ENCODE measurements at regions of chr7 and their contacts with region 1.

Region 1: GRCh38 chr7:128425850-128426249 is 16.1 kb upstream of the IMPDH1 start:
- DNase-seq: peak; percentile 49
- ATAC-seq: peak; percentile 21
- H3K4me3 ChIP-seq: no peak overlapping the region
- H3K27ac ChIP-seq: no peak overlapping the region
- H3K4me1 ChIP-seq: peaks cover 54% of the 10 kb centered on the region
- H3K27me3 ChIP-seq: peaks cover 0 to 12% of the 10 kb centered on the region in 2 experiments; a peak in 3 of 5 replicates
- CTCF ChIP-seq: peak; percentile 88
- EP300 ChIP-seq: no peak
- POLR2A ChIP-seq: no peak
- RAD21 ChIP-seq: peak; percentile 82

Region 2: GRCh38 chr7:128347647-128348097 is 78.2 kb before region 1 on chr7:
- CTCF ChIA-PET with region 1: interaction called, 6 read pairs
- POLR2A ChIA-PET with region 1: no interaction called
- in situ Hi-C with region 1: no loop called
- intact Hi-C with region 1: loop called (anchors 1 kb)
- DNase-seq: peak; percentile 50
- ATAC-seq: peak; percentile 66
- H3K4me3 ChIP-seq: no peak overlapping the region
- H3K27ac ChIP-seq: no peak overlapping the region
- H3K4me1 ChIP-seq: peaks cover 2% of the 10 kb centered on the region; the same call in 1 of the 2 replicates
- H3K27me3 ChIP-seq: peaks cover 2 to 11% of the 10 kb centered on the region in 2 experiments; a peak in 4 of 5 replicates
- CTCF ChIP-seq: peak; percentile 84
- EP300 ChIP-seq: no peak
- POLR2A ChIP-seq: no peak
- RAD21 ChIP-seq: peak; percentile 73

Region 3: DNA sequence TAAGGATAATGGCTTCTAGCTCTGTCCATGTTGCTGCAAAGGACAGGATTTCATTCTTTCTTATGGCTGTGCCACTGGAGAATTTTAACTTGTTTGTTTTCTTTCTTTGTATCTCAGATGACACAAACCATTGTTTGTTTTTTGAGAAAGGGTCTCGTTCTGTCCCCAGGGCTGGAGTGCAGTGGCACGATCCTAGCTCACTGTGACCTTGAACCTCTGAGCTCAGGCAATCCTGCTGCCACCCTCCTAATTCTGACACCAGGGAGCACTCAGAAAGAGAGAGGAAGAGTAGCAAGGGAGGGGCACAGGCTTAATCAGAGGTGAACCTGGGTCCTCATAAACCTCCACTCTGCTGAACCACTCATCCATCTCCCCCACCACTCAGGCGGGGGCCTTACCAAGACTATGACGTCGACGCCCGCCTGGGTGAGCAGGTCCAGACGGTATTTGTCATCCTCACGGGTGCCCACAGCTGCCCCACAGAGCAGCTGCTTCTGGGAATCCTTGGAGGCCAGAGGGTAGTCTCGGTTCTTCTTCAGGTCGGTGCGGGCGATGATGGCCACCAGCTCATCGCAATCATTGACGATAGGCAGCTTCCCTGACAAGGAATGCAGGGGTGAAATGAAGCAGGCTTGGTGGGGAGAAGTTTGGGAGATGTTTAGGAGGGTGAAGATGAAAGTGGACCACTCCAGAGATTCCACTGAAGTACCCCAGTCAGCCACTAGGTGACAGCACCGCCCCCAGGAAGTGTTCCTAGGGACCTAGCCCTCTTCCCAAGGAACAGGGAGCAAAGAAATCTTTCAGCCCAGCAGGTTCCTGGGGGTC is 27.6 kb before region 1 on chr7:
- CTCF ChIA-PET with region 1: interaction called, 48 read pairs
- POLR2A ChIA-PET with region 1: interaction called, 6 read pairs
- in situ Hi-C with region 1: no loop called
- intact Hi-C with region 1: loop called (anchors 1 kb)
- DNase-seq: no peak
- ATAC-seq: peak; percentile 84
- H3K4me3 ChIP-seq: peak overlapping the region in 1 of 3 experiments; percentile 17; a peak in 1 of 6 replicates
- H3K27ac ChIP-seq: peak overlapping the region; percentile 8
- H3K4me1 ChIP-seq: peaks cover 19% of the 10 kb centered on the region
- H3K27me3 ChIP-seq: no peaks in the 10 kb centered on the region
- CTCF ChIP-seq: peak; percentile 89
- EP300 ChIP-seq: no peak
- POLR2A ChIP-seq: no peak
- RAD21 ChIP-seq: peak; percentile 69

Region 4: GRCh38 chr7:128404826-128405470 is 20.9 kb before region 1 on chr7:
- CTCF ChIA-PET with region 1: interaction called, 48 read pairs
- POLR2A ChIA-PET with region 1: interaction called, 3 read pairs
- in situ Hi-C with region 1: no loop called
- intact Hi-C with region 1: loop called (anchors 1 kb)
- DNase-seq: no peak
- ATAC-seq: no peak
- H3K4me3 ChIP-seq: peak overlapping the region; percentile 63 to 89 (median 74)
- H3K27ac ChIP-seq: no peak overlapping the region
- H3K4me1 ChIP-seq: peaks cover 55% of the 10 kb centered on the region
- H3K27me3 ChIP-seq: peaks cover 2 to 10% of the 10 kb centered on the region in 2 experiments; a peak in 2 of 5 replicates
- CTCF ChIP-seq: no peak
- EP300 ChIP-seq: no peak
- POLR2A ChIP-seq: no peak
- RAD21 ChIP-seq: no peak

Region 5: DNA sequence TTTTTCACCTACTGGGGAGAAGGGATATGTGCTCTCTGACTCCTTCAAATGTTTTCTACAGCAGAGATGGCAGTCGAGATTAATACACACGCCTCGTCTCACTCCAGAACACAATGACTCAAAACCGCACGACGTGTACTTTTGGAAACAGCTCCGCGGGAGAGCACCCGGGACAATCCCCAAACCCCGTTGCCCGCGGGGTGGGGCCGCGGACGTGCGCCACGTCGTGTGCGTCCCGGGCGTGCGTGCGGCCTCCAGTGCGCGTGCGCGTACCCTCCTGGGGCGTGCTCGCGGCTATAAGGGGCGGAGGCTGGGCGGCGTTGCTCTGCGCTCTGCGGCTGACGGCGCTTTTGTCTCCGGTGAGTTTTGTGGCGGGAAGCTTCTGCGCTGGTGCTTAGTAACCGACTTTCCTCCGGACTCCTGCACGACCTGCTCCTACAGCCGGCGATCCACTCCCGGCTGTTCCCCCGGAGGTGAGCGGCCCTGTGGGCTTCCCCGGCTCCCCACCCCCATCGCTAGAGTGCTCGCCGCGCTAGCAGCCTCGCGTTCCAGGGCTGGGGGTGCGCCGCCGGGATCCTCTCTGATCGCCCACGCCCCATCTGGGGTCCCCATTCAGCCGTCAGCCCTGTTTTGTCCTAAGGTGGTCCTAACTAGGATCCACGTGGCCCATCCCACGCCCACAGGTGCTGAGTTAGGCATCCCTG is 29.9 kb after region 1 on chr7 and contains the start of gene HILPDA:
- CTCF ChIA-PET with region 1: interaction called, 140 read pairs
- POLR2A ChIA-PET with region 1: interaction called, 7 read pairs
- in situ Hi-C with region 1: loop called (anchors 5 kb)
- intact Hi-C with region 1: no loop called
- DNase-seq: peak; percentile 74
- ATAC-seq: peak; percentile 96
- H3K4me3 ChIP-seq: peak within 1 kb of the TSS; percentile 82 to 96 (median 92)
- H3K27ac ChIP-seq: peak within 1 kb of the TSS; percentile 68
- H3K4me1 ChIP-seq: peaks cover 69% of the 10 kb centered on the region
- H3K27me3 ChIP-seq: peaks cover 0 to 3% of the 10 kb centered on the region in 2 experiments; a peak in 1 of 5 replicates
- CTCF ChIP-seq: peak; percentile 16; the same call in 1 of the 2 replicates
- EP300 ChIP-seq: peak in 1 of 2 experiments; percentile 56; a peak in 2 of 4 replicates
- POLR2A ChIP-seq: peak; percentile 89 to 96
- RAD21 ChIP-seq: no peak
- total RNA-seq, gene HILPDA: 8.6 and 11.1 TPM in 2 replicates

Region 6: GRCh38 chr7:128883622-128884501 is 458.0 kb after region 1 on chr7:
- CTCF ChIA-PET with region 1: no interaction called
- POLR2A ChIA-PET with region 1: no interaction called
- in situ Hi-C with region 1: loop called (anchors 25 kb)
- intact Hi-C with region 1: no loop called
- DNase-seq: peak; percentile 44
- ATAC-seq: peak; percentile 49
- H3K4me3 ChIP-seq: peak overlapping the region; percentile 70 to 79 (median 70)
- H3K27ac ChIP-seq: peak overlapping the region; percentile 21
- H3K4me1 ChIP-seq: peaks cover 39% of the 10 kb centered on the region
- H3K27me3 ChIP-seq: peaks cover 0 to 10% of the 10 kb centered on the region in 2 experiments; a peak in 2 of 5 replicates
- CTCF ChIP-seq: peak; percentile 96
- EP300 ChIP-seq: no peak
- POLR2A ChIP-seq: no peak
- RAD21 ChIP-seq: peak; percentile 65